ENCODE measurements at regions of chr6 and their contacts with region 1.

Region 1: GRCh38 chr6:157981395-157982296 is at the start of gene SYNJ2:
- DNase-seq: peak; percentile 67 to 71
- ATAC-seq: peak; percentile 77 to 78
- H3K4me3 ChIP-seq: peak within 1 kb of the TSS; percentile 89
- H3K27ac ChIP-seq: peak within 1 kb of the TSS; percentile 89 to 97
- H3K4me1 ChIP-seq: peaks cover 40% of the 10 kb centered on the region
- CTCF ChIP-seq: peak; percentile 61
- EP300 ChIP-seq: no peak
- POLR2A ChIP-seq: no peak; the same call in 1 of the 2 replicates
- RAD21 ChIP-seq: peak; percentile 12 to 61; a peak in 3 of 5 replicates
- polyA plus RNA-seq, gene SYNJ2: 22.3 and 24.7 TPM in 2 replicates

Region 2: DNA sequence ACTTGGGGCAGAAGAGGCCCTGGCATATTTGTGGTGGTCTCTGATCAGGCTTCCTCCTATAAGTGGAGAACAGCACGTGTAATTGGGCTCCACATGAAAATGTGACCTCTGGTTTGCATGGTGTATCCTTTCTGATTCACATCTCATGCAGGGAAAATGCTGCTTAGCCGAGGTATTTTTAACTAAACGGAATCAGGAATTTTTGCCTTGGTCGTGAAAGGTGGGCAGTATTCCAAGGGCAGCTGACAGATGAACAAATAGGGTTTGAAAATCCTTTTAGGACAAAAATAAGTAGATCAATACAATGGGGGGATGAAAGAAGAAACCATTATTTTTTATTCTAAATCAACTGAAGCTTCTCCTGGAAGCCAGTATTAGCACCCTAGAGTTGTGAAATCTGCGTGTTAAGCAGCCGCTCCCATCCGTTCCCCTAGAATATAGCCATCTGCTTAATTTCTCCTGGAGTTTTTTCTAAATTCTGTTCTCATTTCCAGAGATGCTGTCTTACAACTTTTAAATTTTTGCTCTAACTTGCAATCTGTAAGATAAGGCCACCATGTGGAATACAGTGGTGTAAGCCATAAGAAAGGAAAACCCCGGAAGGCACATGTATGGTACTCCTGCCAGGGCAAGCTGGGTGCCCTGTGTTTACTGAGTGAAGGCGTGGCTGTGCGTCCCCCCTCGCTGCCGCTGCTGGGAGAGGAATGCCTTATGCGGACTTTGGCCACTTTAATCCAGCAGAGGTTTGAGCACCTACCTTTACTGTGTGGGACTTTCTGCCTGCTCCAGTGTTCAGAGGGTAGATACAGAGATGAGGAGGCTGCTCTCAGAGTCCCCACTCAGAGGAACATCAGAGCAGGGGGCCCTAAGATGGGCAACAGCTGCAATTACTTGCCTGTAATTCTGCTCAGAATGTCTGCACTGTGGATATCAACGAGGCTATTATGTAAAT is 52.4 kb after region 1 on chr6:
- CTCF ChIA-PET with region 1: interaction called, 26 read pairs
- POLR2A ChIA-PET with region 1: no interaction called
- DNase-seq: peak in 1 of 2 experiments; percentile 84
- ATAC-seq: peak; percentile 49 to 75
- H3K4me3 ChIP-seq: 0 out of 3 replicates have a peak overlapping the region, but pooled peaks have one; percentile 14
- H3K27ac ChIP-seq: peak overlapping the region; percentile 92 to 94
- H3K4me1 ChIP-seq: peaks cover 66% of the 10 kb centered on the region
- CTCF ChIP-seq: no peak
- EP300 ChIP-seq: no peak; a peak in 1 of 5 replicates
- POLR2A ChIP-seq: no peak
- RAD21 ChIP-seq: peak in 1 of 2 experiments; percentile 36; a peak in 2 of 5 replicates

Measured in A549 (cell line).